ENCODE measurements at regions of chr3 and their contacts with region 1.

Region 1: GRCh38 chr3:127817396-127817841 is 4.9 kb downstream of the MGLL start:
- DNase-seq: peak; percentile 78 to 98
- H3K4me3 ChIP-seq: peak overlapping the region; percentile 16; the same call in 1 of the 2 replicates
- H3K27ac ChIP-seq: peak overlapping the region; percentile 93
- H3K4me1 ChIP-seq: peaks cover 79% of the 10 kb centered on the region
- H3K27me3 ChIP-seq: no peaks in the 10 kb centered on the region
- CTCF ChIP-seq: peak; percentile 26; the same call in 1 of the 2 replicates

Region 2: DNA sequence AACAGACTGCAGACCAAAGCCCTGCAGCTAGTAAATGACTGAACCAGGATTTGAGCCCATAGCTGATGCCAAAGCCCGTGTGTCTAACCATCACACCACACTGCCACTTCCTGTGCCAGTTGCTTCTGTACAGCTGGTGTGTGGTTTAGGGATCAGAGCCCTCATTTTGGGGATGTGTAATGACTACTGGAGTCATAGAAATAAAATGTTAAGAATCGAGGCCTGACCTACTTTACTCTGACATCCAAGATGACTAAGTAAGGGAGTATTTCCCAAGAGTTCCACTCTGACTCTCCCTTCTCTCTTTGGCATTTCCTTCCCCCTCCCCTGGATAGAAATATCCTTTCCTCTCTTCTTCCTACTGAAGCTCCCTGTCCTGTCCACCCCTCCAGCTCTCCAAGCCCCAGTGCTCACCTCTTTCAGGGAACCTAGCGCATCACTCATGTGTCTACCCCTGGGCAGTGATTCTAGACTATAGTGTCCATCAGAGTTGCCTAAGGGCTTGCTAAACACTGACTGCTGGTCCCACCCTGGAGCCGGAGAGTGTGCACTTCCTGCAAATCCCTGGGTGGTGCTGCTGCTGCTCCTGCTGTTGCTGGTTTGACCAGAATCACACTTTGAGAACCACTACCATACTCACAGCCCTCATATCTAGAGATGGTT is 48.9 kb before region 1 on chr3:
- CTCF ChIA-PET with region 1: no interaction called
- POLR2A ChIA-PET with region 1: interaction called, 4 read pairs
- intact Hi-C with region 1: loop called (anchors 1 kb)
- DNase-seq: peak; percentile 65 to 92
- H3K4me3 ChIP-seq: no peak overlapping the region
- H3K27ac ChIP-seq: peak overlapping the region; percentile 71
- H3K4me1 ChIP-seq: peaks cover 36% of the 10 kb centered on the region
- H3K27me3 ChIP-seq: no peaks in the 10 kb centered on the region
- CTCF ChIP-seq: no peak

Region 3: GRCh38 chr3:127835993-127836882 is 18.8 kb after region 1 on chr3:
- CTCF ChIA-PET with region 1: no interaction called
- POLR2A ChIA-PET with region 1: no interaction called
- intact Hi-C with region 1: no loop called
- DNase-seq: no peak
- H3K4me3 ChIP-seq: no peak overlapping the region
- H3K27ac ChIP-seq: no peak overlapping the region
- H3K4me1 ChIP-seq: no peaks in the 10 kb centered on the region
- H3K27me3 ChIP-seq: no peaks in the 10 kb centered on the region
- CTCF ChIP-seq: no peak

Region 4: DNA sequence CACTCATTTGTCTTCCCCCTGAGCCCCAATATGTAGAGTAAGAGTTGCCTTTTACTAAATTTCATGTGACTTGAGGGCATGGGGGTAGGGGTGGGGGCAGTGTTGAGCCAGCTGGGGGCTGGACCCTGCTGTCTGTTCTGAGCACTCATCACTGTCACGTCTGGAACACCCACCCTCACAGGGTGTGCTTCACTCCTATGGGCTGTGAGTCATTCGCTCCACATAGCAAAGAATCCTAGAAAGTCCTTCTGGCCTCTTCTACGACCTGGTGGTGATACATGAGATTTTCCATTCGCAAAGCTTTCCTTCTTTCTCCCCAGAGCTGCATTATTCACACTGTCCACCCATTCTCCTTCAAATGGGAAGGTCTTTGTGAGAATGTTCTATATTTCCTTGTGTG is 48.5 kb after region 1 on chr3:
- CTCF ChIA-PET with region 1: no interaction called
- POLR2A ChIA-PET with region 1: no interaction called
- intact Hi-C with region 1: no loop called
- DNase-seq: no peak
- H3K4me3 ChIP-seq: no peak overlapping the region
- H3K27ac ChIP-seq: no peak overlapping the region
- H3K4me1 ChIP-seq: no peaks in the 10 kb centered on the region
- H3K27me3 ChIP-seq: no peaks in the 10 kb centered on the region
- CTCF ChIP-seq: no peak; the same call in 1 of the 2 replicates

Region 5: DNA sequence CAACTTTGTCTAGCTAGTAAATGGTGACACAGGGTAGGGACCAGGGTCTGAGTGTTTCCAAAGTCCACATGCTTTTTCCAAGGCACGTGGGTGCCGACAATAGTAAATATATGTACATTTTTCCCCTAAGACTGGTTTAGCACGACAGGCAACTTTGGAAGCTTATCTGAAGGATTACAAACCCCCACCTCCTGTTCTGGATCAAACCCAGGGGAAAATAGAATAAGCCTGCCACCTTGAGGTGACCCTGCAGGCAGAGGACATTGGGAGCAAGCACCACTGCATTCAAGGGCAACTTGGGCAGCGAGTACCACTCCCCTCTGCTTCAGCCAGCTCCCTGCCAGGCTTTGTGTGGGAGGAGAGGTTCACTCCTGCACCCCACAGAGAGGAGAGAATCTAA is 142.4 kb after region 1 on chr3:
- CTCF ChIA-PET with region 1: no interaction called
- POLR2A ChIA-PET with region 1: interaction called, 3 read pairs
- intact Hi-C with region 1: loop called (anchors 1 kb)
- DNase-seq: peak; percentile 69 to 85
- H3K4me3 ChIP-seq: no peak overlapping the region
- H3K27ac ChIP-seq: no peak overlapping the region
- H3K4me1 ChIP-seq: peaks cover 34% of the 10 kb centered on the region
- H3K27me3 ChIP-seq: no peaks in the 10 kb centered on the region
- CTCF ChIP-seq: peak; percentile 63

Measured in PC-9 (cell line).